ENCODE measurements at regions of chr4 and their contacts with region 1.

Region 1: GRCh38 chr4:176123710-176124407 is 58.2 kb downstream of the WDR17 start:
- DNase-seq: no peak
- ATAC-seq: peak; percentile 96
- H3K4me3 Mint-ChIP-seq: peak overlapping the region; percentile 56
- H3K27ac Mint-ChIP-seq: peak overlapping the region; percentile 67
- H3K4me1 Mint-ChIP-seq: peaks cover 20% of the 10 kb centered on the region
- H3K27me3 Mint-ChIP-seq: no peaks in the 10 kb centered on the region
- CTCF ChIP-seq: no peak

Region 2: DNA sequence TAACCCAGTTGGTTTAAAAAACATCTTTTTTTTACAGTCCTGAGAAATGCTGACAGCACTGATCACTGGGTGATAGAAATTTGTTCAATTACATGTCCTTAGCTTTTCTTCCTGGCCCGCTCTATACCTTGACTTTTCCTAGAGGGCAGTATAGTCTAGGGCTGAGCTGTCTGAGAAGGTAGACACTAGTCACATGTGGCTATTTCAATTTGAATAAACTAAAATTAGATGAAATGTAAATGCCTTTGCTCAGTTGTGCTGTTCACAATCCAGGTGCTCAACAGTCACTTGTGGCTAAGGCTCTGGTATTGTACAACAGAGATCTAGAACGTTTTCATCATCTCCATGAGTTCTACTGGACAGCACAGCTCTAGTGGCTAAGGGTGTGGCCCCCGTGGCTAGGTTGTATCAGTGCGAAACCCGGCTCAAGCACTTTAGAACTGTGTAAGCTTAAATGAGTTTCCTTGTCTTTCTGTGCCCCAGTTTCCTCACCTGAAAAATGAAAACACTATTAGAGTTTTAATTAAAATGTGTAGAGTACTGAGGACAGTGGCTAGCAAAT is 169.8 kb before region 1 on chr4:
- CTCF ChIA-PET with region 1: no interaction called
- POLR2A ChIA-PET with region 1: no interaction called
- intact Hi-C with region 1: loop called (anchors 10 kb)
- DNase-seq: no peak
- ATAC-seq: peak; percentile 75
- H3K4me3 Mint-ChIP-seq: no peak overlapping the region
- H3K27ac Mint-ChIP-seq: no peak overlapping the region
- H3K4me1 Mint-ChIP-seq: peaks cover 9% of the 10 kb centered on the region
- H3K27me3 Mint-ChIP-seq: peaks cover 1% of the 10 kb centered on the region
- CTCF ChIP-seq: no peak

Region 3: DNA sequence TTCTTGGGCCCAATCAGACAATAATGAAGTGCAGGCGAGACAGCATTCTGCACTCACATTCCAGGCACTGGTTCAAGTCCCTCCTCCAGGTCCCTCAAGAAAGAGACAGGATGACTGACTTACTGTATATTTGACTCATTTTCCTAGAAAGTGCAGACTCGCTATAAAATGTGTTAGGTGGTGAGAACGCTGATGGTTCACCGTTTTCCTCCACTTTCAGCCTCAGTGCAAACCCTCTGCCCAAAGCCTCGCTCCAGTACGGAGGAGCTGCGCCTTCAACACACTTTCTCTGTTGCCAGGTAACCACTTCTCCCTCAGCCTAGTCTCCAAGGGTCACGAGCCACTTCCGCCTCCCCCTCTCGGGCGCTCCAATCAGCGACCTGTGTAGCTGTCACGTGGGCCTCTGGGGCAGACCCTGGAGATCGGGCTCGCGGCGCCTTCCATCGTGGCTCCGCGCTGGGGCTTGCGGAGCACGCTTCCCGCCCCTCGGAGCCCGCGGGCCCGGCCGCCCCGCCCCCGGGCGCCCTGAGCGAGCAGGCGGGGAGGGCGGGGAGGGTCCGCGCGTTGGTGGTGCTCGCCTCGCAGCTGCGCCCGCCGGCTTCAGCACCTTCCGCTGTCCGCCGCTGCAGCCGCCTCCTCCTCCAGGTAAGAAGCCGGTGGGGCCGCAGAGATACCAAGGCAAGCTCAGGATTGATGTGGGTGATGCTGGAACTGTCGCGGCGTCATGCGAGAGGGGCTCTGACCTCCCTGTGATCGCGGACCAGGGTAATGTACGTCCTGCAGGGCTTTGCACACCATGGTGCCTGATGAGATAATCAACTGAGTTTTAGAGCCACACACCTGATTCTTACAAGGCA is 58.2 kb before region 1 on chr4 and contains the start of gene WDR17:
- CTCF ChIA-PET with region 1: interaction called, 3 read pairs
- POLR2A ChIA-PET with region 1: no interaction called
- intact Hi-C with region 1: loop called (anchors 1 kb)
- DNase-seq: peak; percentile 79
- ATAC-seq: peak; percentile 97
- H3K4me3 Mint-ChIP-seq: peak within 1 kb of the TSS; percentile 90
- H3K27ac Mint-ChIP-seq: peak within 1 kb of the TSS; percentile 73
- H3K4me1 Mint-ChIP-seq: peaks cover 11% of the 10 kb centered on the region
- H3K27me3 Mint-ChIP-seq: peaks cover 3% of the 10 kb centered on the region
- CTCF ChIP-seq: no peak
- total RNA-seq, gene WDR17: 5.7 and 6.2 TPM in 2 replicates

Region 4: GRCh38 chr4:176090115-176090514 is 33.7 kb before region 1 on chr4:
- CTCF ChIA-PET with region 1: no interaction called
- POLR2A ChIA-PET with region 1: no interaction called
- intact Hi-C with region 1: loop called (anchors 1 kb)
- DNase-seq: no peak
- ATAC-seq: peak; percentile 95
- H3K4me3 Mint-ChIP-seq: peak overlapping the region; percentile 9
- H3K27ac Mint-ChIP-seq: peak overlapping the region; percentile 33
- H3K4me1 Mint-ChIP-seq: peaks cover 20% of the 10 kb centered on the region
- H3K27me3 Mint-ChIP-seq: no peaks in the 10 kb centered on the region
- CTCF ChIP-seq: no peak

Region 5: DNA sequence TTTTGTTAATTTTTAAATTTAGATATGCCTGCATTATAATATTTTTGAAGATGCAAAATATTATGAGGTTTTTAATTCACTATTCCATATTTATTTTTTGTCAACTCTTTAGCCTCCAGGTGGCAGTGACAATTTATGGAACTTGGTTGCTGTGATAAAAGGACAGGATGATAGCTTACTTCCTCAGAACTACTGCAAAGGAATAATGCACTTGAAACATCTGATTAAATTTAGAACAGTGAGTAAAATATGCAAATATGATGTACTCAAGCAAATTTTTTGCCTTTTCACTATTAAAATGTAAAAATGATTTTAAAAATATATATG is 26.5 kb after region 1 on chr4:
- CTCF ChIA-PET with region 1: no interaction called
- POLR2A ChIA-PET with region 1: no interaction called
- intact Hi-C with region 1: loop called (anchors 2 kb)
- DNase-seq: no peak
- ATAC-seq: no peak
- H3K4me3 Mint-ChIP-seq: no peak overlapping the region
- H3K27ac Mint-ChIP-seq: no peak overlapping the region
- H3K4me1 Mint-ChIP-seq: no peaks in the 10 kb centered on the region
- H3K27me3 Mint-ChIP-seq: no peaks in the 10 kb centered on the region
- CTCF ChIP-seq: no peak

Region 6: DNA sequence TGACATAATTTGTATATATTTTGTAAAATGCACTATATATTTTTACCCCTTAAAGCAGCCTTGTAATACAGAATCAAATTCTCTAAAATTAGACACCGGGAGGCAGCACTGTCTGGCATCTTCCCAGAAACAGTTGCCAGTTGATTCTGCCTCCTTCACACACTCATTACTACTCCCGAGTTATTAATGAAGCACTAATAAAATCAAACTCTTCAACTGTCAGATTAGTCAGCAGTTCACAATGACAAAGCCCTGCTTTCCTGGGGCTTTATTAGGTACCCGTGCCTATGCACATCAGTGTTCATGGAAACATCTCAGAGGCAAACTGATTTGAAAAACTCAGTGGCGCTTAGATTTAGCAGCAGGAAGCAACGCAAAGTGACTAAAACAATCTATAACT is 772.4 kb after region 1 on chr4:
- CTCF ChIA-PET with region 1: no interaction called
- POLR2A ChIA-PET with region 1: no interaction called
- intact Hi-C with region 1: no loop called
- DNase-seq: no peak
- ATAC-seq: no peak
- H3K4me3 Mint-ChIP-seq: no peak overlapping the region
- H3K27ac Mint-ChIP-seq: no peak overlapping the region
- H3K4me1 Mint-ChIP-seq: no peaks in the 10 kb centered on the region
- H3K27me3 Mint-ChIP-seq: no peaks in the 10 kb centered on the region
- CTCF ChIP-seq: no peak